ENCODE measurements at regions of chr2 and their contacts with region 1.

Region 1: DNA sequence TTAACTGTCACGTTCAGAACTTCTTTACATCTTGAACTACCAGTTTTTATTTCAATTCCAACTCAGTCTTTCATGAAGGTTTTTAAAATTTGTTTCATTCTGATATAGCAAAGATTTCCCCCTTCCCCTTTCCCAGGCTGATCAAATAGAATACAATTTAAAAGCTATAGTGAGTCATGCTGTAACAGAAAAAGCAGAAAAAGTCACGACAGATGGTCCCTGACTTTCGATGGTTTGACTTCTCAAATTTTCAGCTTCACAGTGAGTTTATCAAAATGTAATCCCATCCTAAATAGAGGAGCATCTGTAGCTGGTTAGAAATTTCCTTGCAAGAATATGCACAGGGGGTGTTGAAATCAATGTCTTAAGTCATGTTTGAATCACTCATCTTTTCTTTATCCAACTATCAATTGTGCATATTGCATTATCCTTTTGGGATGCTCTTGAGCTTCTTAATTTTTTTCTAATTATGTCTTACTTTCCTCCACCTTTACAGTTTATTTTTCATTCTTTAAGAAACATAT is 500.3 kb downstream of the LRP1B start:
- DNase-seq: no peak
- H3K4me3 ChIP-seq: no peak overlapping the region
- H3K27ac ChIP-seq: no peak overlapping the region
- H3K4me1 ChIP-seq: no peaks in the 10 kb centered on the region
- H3K27me3 ChIP-seq: no peaks in the 10 kb centered on the region
- CTCF ChIP-seq: no peak

Region 2: DNA sequence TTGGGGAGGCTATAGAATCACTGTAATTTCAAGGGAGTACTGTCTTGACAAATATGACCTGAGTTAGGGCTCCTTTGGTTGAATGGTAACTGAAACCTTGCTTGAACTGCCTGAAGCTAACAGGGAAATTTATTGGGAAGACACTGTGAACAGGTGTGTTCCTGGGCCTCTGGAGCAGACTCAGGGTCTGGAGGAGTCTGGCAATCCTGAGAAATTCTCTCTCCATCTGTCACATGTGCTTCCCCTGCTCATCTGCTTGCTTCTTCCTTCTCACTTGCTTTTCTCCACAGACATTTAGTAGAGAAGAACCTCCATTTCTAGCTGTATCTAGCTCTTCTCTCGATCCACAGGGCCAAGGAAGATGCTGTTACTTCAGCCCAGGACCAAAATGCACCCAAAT is 23.8 kb after region 1 on chr2:
- CTCF ChIA-PET with region 1: no interaction called
- POLR2A ChIA-PET with region 1: interaction called, 10 read pairs
- intact Hi-C with region 1: no loop called
- DNase-seq: no peak
- H3K4me3 ChIP-seq: no peak overlapping the region
- H3K27ac ChIP-seq: no peak overlapping the region
- H3K4me1 ChIP-seq: no peaks in the 10 kb centered on the region
- H3K27me3 ChIP-seq: no peaks in the 10 kb centered on the region
- CTCF ChIP-seq: no peak

Region 3: DNA sequence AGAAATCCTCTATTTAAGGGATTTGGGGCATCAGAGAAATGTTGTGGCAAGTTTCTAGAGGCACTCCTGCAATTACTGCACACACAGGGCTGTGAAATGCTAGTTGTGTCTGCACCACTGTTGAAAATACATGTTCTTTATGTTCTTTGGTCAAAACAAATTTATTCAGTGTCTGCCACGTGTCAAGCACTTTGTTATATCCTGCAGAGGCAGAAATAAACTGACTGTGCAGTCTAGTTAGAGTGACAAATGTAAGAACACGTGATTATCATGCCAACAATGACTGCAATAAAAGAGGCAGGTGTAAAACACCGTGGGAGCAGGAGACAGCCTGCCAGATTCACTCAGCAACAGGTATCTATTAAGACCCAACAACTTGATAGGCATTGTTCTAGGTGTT is 77.0 kb after region 1 on chr2:
- CTCF ChIA-PET with region 1: no interaction called
- POLR2A ChIA-PET with region 1: no interaction called
- intact Hi-C with region 1: no loop called
- DNase-seq: no peak
- H3K4me3 ChIP-seq: no peak overlapping the region
- H3K27ac ChIP-seq: no peak overlapping the region
- H3K4me1 ChIP-seq: no peaks in the 10 kb centered on the region
- H3K27me3 ChIP-seq: no peaks in the 10 kb centered on the region
- CTCF ChIP-seq: no peak